ENCODE measurements at regions of chr1 and their contacts with region 1.

Region 1: GRCh38 chr1:28745653-28746173 is 9.0 kb downstream of the YTHDF2 start:
- DNase-seq: no peak
- H3K4me3 ChIP-seq: no peak overlapping the region
- H3K27ac ChIP-seq: no peak overlapping the region
- H3K4me1 ChIP-seq: peaks cover 14% of the 10 kb centered on the region
- H3K27me3 ChIP-seq: no peaks in the 10 kb centered on the region
- CTCF ChIP-seq: no peak
- EP300 ChIP-seq: no peak
- POLR2A ChIP-seq: no peak

Region 2: DNA sequence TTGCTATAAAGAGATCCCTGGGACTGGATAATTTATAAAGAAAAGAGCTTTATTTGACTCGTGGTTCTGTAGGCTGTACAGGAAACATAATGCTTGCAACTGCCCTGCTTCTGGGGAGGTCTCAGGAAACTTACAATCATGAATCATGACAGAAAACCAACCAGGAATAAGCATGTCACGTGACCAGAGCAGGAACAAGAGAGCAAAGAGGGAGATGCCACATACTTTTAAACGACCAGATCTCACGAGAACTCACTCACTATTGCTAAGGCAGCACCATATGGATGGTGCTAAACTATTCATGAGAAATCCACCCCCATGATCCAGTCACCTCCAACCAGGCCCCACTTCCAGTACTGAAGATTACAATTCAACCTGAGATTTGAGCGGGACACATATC is 289.6 kb before region 1 on chr1:
- intact Hi-C with region 1: no loop called
- DNase-seq: no peak
- H3K4me3 ChIP-seq: no peak overlapping the region
- H3K27ac ChIP-seq: no peak overlapping the region
- H3K4me1 ChIP-seq: no peaks in the 10 kb centered on the region
- H3K27me3 ChIP-seq: no peaks in the 10 kb centered on the region
- CTCF ChIP-seq: no peak
- EP300 ChIP-seq: no peak
- POLR2A ChIP-seq: no peak

Region 3: DNA sequence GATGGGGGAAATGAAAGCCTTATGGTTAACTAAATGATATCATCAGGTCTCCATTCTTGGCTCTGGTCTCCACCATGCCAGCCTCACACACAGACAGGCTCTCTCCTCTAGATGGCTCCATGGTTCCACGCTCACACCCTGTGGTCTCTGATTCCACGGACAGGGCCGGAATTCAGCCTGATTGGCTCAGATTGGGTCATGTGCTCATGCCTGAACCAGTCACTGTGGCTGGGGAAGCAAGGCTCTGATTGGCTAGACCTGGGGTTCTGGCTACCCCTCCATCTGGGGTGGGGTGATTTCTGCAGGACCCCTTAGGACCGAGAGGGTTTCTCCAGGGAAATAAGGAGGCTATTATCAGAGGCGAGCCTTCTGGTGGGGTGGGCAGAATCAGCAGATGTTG is 767.6 kb after region 1 on chr1:
- intact Hi-C with region 1: loop called in 1 of 4 experiments (anchors 5 kb)
- DNase-seq: no peak
- H3K4me3 ChIP-seq: no peak overlapping the region
- H3K27ac ChIP-seq: no peak overlapping the region
- H3K4me1 ChIP-seq: no peaks in the 10 kb centered on the region
- H3K27me3 ChIP-seq: no peaks in the 10 kb centered on the region
- CTCF ChIP-seq: no peak
- EP300 ChIP-seq: no peak
- POLR2A ChIP-seq: no peak

Measured in ovary (tissue), 10 donors.